Activated T-helper 2 cell treated with anti-CD3 and anti-CD28 coated beads, Interferon-gamma antibody, Interleukin-2, Interleukin-4, amounts not matched to agents 10 μg/mL and 5 μg/mL and 100 μg/mL, durations not matched to agents 14 hours and 24 hours and 36 hours (primary cell): ENCODE measurements at regions of chr1 and their contacts with region 1.

Region 1: DNA sequence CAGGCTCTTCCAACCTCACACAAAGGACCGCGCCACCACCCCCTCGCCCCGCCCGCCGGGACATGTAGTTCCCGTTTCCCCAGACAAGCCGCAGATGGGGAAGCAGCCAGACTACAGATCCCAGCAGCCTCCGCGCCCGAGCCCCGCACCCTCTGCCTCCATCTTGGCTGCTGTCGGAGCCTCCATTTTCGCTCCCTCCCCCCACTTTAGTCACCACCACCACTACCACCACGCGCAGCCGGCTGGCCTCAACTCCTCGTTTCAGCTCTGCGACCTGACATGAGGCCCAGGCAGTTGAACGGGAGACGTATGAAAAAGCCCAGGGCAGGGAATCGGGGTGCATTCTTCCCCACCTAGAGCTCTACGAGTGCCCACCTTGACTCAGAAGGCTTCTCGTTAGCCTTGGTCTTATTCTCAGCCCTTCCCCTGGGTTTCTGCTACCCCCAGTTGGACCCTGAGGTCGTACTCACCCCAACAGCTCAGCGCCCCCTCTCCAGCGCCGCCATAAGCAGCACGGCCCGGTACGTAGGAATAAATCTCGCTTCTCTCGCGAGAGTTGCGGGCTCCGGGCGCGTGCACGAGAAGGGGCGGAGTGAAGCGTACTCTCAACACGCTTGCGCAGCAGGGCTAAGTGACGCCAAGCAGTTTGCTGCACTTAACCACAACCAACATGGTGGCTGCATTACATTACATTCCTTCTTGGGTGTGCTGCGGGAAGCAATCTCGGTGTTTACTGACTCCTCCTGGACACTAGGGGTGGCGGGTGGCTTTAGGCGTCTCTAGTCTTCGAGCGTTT is at the start of gene CSDE1:
- DNase-seq: peak; percentile 96
- H3K4me3 Mint-ChIP-seq: peak within 1 kb of the TSS; percentile 97
- H3K27ac Mint-ChIP-seq: peak within 1 kb of the TSS; percentile 99
- H3K4me1 Mint-ChIP-seq: peaks cover 53% of the 10 kb centered on the region
- H3K27me3 Mint-ChIP-seq: no peaks in the 10 kb centered on the region
- total RNA-seq, gene CSDE1: 411 and 414 TPM in 2 replicates

Region 2: DNA sequence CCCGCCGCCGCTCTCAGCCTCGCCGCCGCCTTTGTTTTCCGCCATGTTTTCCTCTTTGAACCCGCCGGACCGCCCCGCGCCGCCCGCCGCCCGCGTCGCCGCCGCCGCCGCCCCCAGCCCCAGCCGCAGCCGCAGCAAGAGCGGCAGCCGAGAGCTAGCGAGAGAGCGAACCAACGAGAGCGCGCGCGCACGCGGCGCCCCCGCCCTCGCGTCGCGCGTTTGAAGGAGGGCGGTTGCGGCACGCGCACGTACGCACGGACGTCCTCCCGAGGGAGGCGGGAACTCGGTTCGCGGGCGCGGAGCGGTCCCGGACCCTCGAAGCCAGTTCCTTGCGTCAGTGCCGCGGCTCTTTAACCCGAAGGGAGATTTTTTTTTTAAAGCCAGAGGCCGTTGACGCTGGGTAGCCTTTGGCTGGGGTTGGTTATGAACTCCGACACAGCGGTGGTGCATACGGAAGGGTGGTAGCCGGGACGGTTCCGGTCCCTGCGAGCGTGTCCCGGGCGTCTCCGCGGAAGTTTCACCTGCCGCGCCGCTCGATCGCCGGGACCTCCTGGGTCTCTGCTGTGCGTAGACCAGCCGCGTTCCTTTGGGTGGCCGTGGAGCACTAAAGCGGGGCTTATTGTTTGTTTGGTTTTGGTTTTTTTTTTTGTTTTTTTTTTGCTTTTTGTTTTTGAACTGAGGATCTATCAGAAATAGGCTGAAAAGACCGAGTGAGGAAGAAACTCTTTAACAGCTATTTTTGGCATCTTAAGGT is 246.4 kb before region 1 on chr1 and contains the start of gene TRIM33:
- intact Hi-C with region 1: loop called (anchors 1 kb)
- DNase-seq: peak; percentile 91
- H3K4me3 Mint-ChIP-seq: peak within 1 kb of the TSS; percentile 88
- H3K27ac Mint-ChIP-seq: peak within 1 kb of the TSS; percentile 97
- H3K4me1 Mint-ChIP-seq: peaks cover 41% of the 10 kb centered on the region
- H3K27me3 Mint-ChIP-seq: no peaks in the 10 kb centered on the region
- total RNA-seq, gene TRIM33: 41.5 and 44.7 TPM in 2 replicates

Region 3: GRCh38 chr1:114670083-114671010 is 87.3 kb before region 1 on chr1:
- intact Hi-C with region 1: loop called (anchors 1 kb)
- DNase-seq: peak; percentile 72
- H3K4me3 Mint-ChIP-seq: peak overlapping the region; percentile 86
- H3K27ac Mint-ChIP-seq: no peak overlapping the region
- H3K4me1 Mint-ChIP-seq: peaks cover 4% of the 10 kb centered on the region
- H3K27me3 Mint-ChIP-seq: peaks cover 41% of the 10 kb centered on the region

Region 4: GRCh38 chr1:114746450-114747121 is 11.1 kb before region 1 on chr1:
- intact Hi-C with region 1: loop called (anchors 1 kb)
- DNase-seq: no peak
- H3K4me3 Mint-ChIP-seq: no peak overlapping the region
- H3K27ac Mint-ChIP-seq: no peak overlapping the region
- H3K4me1 Mint-ChIP-seq: peaks cover 66% of the 10 kb centered on the region
- H3K27me3 Mint-ChIP-seq: no peaks in the 10 kb centered on the region